Activated CD4-positive, alpha-beta T cell treated with anti-CD3 and anti-CD28 coated beads for 36 hours (primary cell): ENCODE measurements at regions of chr4 and their contacts with region 1.

Region 1: DNA sequence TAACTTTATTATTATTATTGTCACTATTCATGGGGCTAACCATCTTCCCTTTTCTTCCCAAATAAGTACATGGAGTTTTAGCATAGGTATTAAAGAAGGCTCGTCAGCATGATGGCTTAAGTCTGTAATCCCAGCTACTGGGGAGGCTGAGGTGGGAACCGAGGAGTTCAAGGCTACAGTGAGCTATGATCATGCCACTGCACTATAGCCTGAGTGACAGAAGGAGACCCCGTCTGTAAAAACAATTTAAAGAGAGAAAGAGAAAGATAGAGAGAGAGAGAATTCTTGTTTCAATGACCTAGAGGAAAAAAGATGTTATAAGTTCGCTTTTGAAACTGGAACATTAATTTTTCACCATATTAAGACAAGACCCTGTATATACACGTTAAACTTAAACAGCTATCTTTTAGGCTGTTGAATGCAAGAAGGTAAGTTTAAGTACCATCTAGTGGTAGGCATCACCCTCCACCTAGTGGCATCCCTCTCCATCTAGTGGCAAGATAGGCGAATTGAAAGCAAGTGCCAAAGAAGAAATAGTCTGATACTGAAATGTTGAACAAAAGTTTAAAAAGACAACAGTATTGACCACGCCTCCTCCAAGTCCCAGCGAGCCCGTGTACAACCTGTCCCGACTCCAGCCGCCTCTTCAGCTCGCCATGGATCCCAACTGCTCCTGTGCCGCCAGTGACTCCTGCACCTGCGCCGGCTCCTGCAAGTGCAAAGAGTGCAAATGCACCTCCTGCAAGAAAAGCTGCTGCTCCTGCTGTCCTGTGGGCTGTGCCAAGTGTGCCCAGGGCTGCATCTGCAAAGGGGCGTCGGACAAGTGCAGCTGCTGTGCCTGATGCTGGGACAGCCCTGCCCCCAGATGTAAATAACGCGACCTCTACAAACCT is 26.0 kb upstream of the YTHDC1 start:
- DNase-seq: peak; percentile 57
- ATAC-seq: peak; percentile 79
- H3K4me3 Mint-ChIP-seq: peak overlapping the region; percentile 64
- H3K27ac Mint-ChIP-seq: no peak overlapping the region
- H3K4me1 Mint-ChIP-seq: peaks cover 15% of the 10 kb centered on the region
- H3K27me3 Mint-ChIP-seq: peaks cover 2% of the 10 kb centered on the region

Region 2: DNA sequence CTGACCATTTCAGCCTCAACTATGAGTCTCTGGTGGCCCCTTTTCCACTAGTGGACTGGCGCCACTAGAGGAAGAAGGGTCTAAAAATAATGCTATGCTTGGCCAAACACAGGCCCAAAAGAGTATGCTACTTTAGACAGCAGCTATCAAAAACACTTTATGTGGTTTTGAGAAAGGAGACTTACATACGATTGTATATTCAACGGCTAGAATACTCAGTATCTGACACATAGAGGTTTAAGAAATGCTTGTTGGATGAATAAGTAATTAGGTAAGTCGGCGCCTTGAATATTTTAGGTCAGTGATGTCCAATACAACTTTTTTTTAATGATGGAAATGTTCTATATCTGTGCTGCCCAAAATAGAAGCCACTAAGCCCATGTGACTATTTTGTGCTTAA is 386.9 kb before region 1 on chr4:
- CTCF ChIA-PET with region 1: interaction called, 3 read pairs
- POLR2A ChIA-PET with region 1: no interaction called
- intact Hi-C with region 1: loop called in 1 of 2 experiments (anchors 2 kb)
- DNase-seq: no peak
- ATAC-seq: no peak
- H3K4me3 Mint-ChIP-seq: no peak overlapping the region
- H3K27ac Mint-ChIP-seq: no peak overlapping the region
- H3K4me1 Mint-ChIP-seq: peaks cover 5% of the 10 kb centered on the region
- H3K27me3 Mint-ChIP-seq: no peaks in the 10 kb centered on the region

Region 3: GRCh38 chr4:68175562-68176155 is 200.3 kb before region 1 on chr4:
- CTCF ChIA-PET with region 1: interaction called, 3 read pairs
- POLR2A ChIA-PET with region 1: no interaction called
- intact Hi-C with region 1: loop called in 1 of 2 experiments (anchors 10 kb)
- DNase-seq: peak; percentile 64
- ATAC-seq: peak; percentile 77
- H3K4me3 Mint-ChIP-seq: no peak overlapping the region
- H3K27ac Mint-ChIP-seq: no peak overlapping the region
- H3K4me1 Mint-ChIP-seq: no peaks in the 10 kb centered on the region
- H3K27me3 Mint-ChIP-seq: peaks cover 14% of the 10 kb centered on the region

Region 4: GRCh38 chr4:68271851-68272756 is 103.8 kb before region 1 on chr4:
- CTCF ChIA-PET with region 1: interaction called, 37 read pairs
- POLR2A ChIA-PET with region 1: no interaction called
- intact Hi-C with region 1: loop called (anchors 1 kb)
- DNase-seq: peak; percentile 22
- ATAC-seq: peak; percentile 69
- H3K4me3 Mint-ChIP-seq: no peak overlapping the region
- H3K27ac Mint-ChIP-seq: no peak overlapping the region
- H3K4me1 Mint-ChIP-seq: peaks cover 4% of the 10 kb centered on the region
- H3K27me3 Mint-ChIP-seq: peaks cover 8% of the 10 kb centered on the region

Region 5: DNA sequence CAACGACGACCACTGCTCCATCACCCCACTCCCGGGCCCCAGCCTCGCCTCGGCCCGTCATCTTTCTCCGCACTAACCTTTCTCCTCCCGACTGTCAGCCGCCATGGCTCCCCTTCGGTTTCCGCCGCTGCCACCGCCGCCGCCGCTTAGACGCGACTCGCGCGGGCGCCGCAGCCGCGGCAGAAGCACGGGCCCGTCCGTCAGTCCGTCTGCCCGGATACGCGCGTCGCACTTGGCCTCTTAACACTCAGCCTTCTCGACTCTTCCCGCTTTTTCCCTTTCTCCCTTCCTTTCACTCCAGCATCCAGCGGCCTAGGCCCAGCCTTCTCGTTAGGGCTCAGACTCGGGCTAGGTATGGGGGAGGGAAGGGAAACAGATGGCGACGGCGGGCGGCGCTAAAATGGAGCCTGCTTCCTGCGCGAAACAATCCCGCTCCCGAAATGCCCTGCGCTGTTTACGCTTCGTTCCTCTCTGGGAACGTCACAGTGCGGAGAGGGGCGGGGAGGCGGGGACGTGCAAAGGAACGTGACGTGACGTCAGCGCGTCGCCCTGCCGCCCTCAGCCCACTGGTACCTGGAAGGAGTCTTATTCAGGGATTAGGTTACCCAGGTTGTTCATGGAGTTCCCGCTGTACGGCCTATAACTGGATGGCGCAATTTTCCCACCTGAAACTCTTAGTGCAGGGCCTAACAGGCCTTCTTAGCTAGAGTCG is 26.1 kb before region 1 on chr4 and contains the start of gene YTHDC1:
- CTCF ChIA-PET with region 1: interaction called, 7 read pairs
- POLR2A ChIA-PET with region 1: no interaction called
- intact Hi-C with region 1: loop called (anchors 1 kb)
- DNase-seq: peak; percentile 98
- ATAC-seq: peak; percentile 96
- H3K4me3 Mint-ChIP-seq: peak within 1 kb of the TSS; percentile 87
- H3K27ac Mint-ChIP-seq: peak within 1 kb of the TSS; percentile 98
- H3K4me1 Mint-ChIP-seq: peaks cover 26% of the 10 kb centered on the region
- H3K27me3 Mint-ChIP-seq: no peaks in the 10 kb centered on the region
- total RNA-seq, gene YTHDC1: 78.5 to 83.0 TPM

Region 6: DNA sequence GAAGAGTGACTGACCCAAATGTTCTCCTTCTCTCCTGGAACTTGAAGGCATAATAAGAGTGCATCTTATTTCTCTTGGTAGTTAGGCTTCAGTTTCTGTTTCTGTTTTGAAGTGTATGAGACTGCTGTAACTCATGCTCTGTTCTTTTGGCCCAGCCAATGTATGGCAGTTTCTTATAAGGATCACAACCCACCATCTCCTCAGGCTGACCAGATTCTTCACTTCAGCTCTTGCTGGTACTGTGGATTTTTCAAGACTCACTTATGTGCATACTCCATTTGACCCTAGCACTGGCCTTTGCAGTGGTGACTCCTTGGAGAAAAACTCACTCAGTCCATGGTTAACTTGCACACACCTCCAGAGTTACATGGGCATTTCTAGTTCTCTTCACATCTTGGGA is 16.4 kb before region 1 on chr4:
- CTCF ChIA-PET with region 1: interaction called, 12 read pairs
- POLR2A ChIA-PET with region 1: no interaction called
- intact Hi-C with region 1: no loop called
- DNase-seq: no peak
- ATAC-seq: peak; percentile 94
- H3K4me3 Mint-ChIP-seq: no peak overlapping the region
- H3K27ac Mint-ChIP-seq: peak overlapping the region; percentile 20
- H3K4me1 Mint-ChIP-seq: peaks cover 6% of the 10 kb centered on the region
- H3K27me3 Mint-ChIP-seq: peaks cover 8% of the 10 kb centered on the region

Region 7: DNA sequence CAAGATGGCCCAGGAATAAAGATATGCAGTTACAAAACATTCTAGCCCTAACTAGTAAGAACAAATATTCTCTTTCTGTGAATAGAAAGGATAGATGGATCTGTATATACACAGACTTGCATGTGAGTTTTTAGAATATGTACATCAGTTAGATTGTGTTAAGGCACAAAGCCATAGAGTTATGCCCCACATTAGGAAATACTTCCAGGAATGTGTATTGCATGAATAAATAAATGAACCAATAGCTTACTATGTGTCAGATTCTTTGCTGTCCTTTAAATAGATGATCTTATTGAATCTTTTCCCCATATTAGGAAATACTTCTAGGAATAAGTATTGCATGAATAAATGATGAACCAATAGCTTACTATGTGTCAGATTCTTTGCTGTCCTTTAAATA is 25.4 kb after region 1 on chr4:
- CTCF ChIA-PET with region 1: no interaction called
- POLR2A ChIA-PET with region 1: no interaction called
- intact Hi-C with region 1: no loop called
- DNase-seq: no peak
- ATAC-seq: no peak
- H3K4me3 Mint-ChIP-seq: no peak overlapping the region
- H3K27ac Mint-ChIP-seq: no peak overlapping the region
- H3K4me1 Mint-ChIP-seq: no peaks in the 10 kb centered on the region
- H3K27me3 Mint-ChIP-seq: no peaks in the 10 kb centered on the region

Region 8: DNA sequence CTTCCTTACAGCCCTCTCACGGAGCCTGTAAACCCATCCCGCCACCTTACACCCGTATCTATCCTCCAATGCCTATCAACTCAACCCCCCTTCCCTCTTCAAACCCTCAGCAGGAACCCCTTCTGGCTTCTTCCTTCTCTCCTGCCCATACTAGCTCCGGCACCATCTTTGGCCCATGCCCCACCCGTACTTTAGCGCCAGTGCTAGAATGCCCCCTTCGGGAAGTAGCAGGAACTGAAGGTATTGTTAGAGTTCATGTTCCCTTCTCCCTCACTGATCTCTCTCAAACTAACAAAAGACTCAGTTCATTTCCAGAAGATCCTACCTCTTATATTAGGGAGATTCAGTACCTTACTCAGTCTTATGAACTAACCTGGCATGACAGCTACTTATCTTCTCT is 297.2 kb after region 1 on chr4:
- CTCF ChIA-PET with region 1: no interaction called
- POLR2A ChIA-PET with region 1: no interaction called
- intact Hi-C with region 1: no loop called
- DNase-seq: no peak
- ATAC-seq: no peak
- H3K4me3 Mint-ChIP-seq: no peak overlapping the region
- H3K27ac Mint-ChIP-seq: no peak overlapping the region
- H3K4me1 Mint-ChIP-seq: no peaks in the 10 kb centered on the region
- H3K27me3 Mint-ChIP-seq: no peaks in the 10 kb centered on the region